PC-9 (cell line): ENCODE measurements at regions of chr3 and their contacts with region 1.

Region 1: DNA sequence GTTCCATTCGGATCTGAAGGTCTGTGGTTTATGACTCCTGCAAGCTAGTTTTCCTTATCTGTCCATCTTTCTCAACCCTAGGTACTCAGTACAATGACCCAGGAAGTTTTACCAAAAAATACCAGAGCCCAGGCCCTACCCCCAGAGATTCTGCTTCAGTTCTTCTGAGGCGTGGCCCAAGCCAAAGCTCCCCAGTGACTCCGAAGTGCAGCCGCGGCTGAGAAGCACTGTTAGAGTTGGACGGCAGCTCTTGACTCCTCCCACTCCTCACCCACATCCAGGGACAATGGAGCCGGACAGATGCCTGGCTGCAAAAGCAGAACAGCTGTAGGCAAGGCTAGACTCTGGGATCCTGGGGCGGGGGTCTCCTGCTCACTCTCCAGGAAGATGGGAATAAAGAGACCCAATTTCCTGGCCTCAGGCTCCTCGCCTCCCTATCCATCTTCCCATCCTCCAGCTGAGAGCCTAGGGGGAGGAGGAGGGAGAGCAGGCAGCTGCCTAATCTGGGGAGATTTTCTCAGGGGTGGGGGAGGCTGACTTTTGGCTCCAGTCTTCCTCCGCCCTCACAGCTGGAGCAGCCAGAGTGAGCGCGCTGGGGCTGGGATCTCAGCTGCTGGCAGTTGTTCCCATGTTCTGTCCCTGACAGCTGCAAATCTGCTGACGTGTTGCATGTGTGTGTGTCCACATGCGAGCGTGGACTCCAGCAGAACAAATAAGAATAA is 223.7 kb downstream of the OPA1 start:
- DNase-seq: peak; percentile 94 to 97
- H3K4me3 ChIP-seq: no peak overlapping the region; the same call in 1 of the 2 replicates
- H3K27ac ChIP-seq: peak overlapping the region; percentile 47
- H3K4me1 ChIP-seq: peaks cover 67% of the 10 kb centered on the region
- H3K27me3 ChIP-seq: no peaks in the 10 kb centered on the region
- CTCF ChIP-seq: no peak

Region 2: GRCh38 chr3:193796069-193796468 is 20.7 kb before region 1 on chr3:
- CTCF ChIA-PET with region 1: no interaction called
- POLR2A ChIA-PET with region 1: no interaction called
- intact Hi-C with region 1: loop called (anchors 2 kb)
- DNase-seq: peak; percentile 59 to 60
- H3K4me3 ChIP-seq: no peak overlapping the region
- H3K27ac ChIP-seq: no peak overlapping the region
- H3K4me1 ChIP-seq: peaks cover 18% of the 10 kb centered on the region
- H3K27me3 ChIP-seq: no peaks in the 10 kb centered on the region
- CTCF ChIP-seq: no peak

Region 3: GRCh38 chr3:194231929-194232842 is 415.4 kb after region 1 on chr3:
- CTCF ChIA-PET with region 1: no interaction called
- POLR2A ChIA-PET with region 1: interaction called, 12 read pairs
- intact Hi-C with region 1: no loop called
- DNase-seq: peak; percentile 35 to 82
- H3K4me3 ChIP-seq: no peak overlapping the region
- H3K27ac ChIP-seq: peak overlapping the region; percentile 7; the same call in 1 of the 2 replicates
- H3K4me1 ChIP-seq: peaks cover 20% of the 10 kb centered on the region
- H3K27me3 ChIP-seq: no peaks in the 10 kb centered on the region
- CTCF ChIP-seq: no peak